ENCODE measurements at regions of chr10 and their contacts with region 1.

Region 1: GRCh38 chr10:89327784-89328441 is at the start of gene IFIT3:
- DNase-seq: no peak
- ATAC-seq: peak; percentile 22
- H3K4me3 Mint-ChIP-seq: peak within 1 kb of the TSS; percentile 86
- H3K27ac Mint-ChIP-seq: peak within 1 kb of the TSS; percentile 90
- H3K4me1 Mint-ChIP-seq: peaks cover 57% of the 10 kb centered on the region
- H3K27me3 Mint-ChIP-seq: no peaks in the 10 kb centered on the region
- CTCF ChIP-seq: no peak
- total RNA-seq, gene IFIT3: 3.2 TPM in 2 replicates

Region 2: DNA sequence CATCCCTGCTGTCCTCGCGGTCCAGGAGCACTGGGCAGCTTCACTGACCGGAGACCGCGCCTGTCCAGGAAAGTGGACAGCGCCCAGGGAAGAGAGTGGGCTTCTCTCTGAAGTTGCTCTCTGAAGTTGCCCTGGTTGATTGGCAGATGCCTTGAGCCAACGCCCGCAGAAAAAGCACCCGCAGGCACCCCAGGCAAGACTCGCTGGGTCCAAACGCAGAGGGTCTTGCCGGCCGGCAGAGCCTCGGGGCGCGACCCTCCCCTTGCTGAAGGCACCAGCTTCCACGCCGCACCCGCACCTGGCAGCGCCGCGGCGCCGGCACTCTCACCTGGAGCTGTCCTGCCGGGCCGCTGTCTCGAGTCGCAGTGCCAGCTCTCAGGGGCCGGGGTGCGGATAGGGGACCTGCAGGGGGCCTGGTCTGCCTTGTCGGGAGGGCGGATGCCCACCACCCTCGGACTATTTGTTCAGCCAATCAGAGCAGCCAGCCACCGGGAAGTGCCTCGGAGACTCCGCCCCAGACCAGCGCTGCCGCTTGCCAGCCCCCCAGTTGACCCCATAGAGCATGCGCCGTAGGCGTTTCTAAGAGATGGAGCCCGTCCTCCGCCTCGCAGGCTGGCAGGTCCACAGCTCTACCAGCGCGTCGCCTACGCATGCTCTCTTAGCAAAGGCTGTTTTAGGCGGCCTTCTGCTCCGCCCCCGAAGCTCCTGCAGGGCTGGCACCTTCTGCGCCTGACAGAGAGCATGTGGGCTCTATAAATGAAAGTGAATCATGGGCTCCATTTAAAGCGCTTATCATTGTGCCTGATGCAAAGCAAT is 76.3 kb before region 1 on chr10 and contains the start of gene LIPA:
- CTCF ChIA-PET with region 1: no interaction called
- POLR2A ChIA-PET with region 1: no interaction called
- intact Hi-C with region 1: loop called (anchors 1 kb)
- DNase-seq: peak; percentile 90
- ATAC-seq: peak; percentile 93
- H3K4me3 Mint-ChIP-seq: peak within 1 kb of the TSS; percentile 91
- H3K27ac Mint-ChIP-seq: peak within 1 kb of the TSS; percentile 79
- H3K4me1 Mint-ChIP-seq: peaks cover 26% of the 10 kb centered on the region
- H3K27me3 Mint-ChIP-seq: peaks cover 3% of the 10 kb centered on the region
- CTCF ChIP-seq: no peak
- total RNA-seq, gene LIPA: 32.8 and 35.3 TPM in 2 replicates

Region 3: DNA sequence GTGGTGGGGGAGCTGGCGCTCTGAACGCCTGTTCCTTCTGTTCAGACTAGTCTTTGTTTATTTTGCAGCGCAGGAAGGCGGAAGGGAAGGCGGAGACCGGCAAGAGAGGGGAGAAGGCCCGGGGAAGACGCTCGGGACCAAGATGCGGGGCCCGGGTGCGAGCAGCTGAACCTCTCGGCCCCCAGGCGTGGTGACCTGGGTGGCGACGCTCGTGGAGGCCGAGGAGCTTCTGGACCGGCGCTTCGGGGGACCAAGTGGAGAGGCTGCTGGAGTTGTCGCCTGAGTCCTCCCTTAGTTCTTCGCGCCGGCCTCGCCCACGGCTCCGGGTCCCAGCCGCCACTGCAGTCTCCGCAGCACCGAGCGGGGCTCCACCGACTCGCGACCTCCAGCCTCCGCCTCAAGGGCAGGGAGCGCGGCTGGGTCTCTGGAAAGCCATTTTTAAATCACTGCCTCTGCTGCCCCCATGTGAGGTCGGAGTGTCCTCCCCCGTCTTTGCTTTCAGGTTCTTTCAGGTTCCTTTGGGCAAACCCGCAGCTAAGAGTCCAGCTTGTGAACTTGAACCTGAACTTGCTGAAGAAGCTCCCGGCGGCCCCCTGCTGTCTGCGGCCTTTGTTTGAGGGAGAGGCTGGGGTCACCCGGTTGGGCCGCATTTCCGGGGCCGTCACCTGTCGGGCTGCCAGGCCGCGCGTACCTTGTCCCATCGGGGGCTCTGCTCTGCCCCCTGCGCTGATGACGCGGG is 509.4 kb after region 1 on chr10:
- CTCF ChIA-PET with region 1: no interaction called
- POLR2A ChIA-PET with region 1: no interaction called
- intact Hi-C with region 1: no loop called
- DNase-seq: peak; percentile 48
- ATAC-seq: peak; percentile 70
- H3K4me3 Mint-ChIP-seq: peak overlapping the region; percentile 83
- H3K27ac Mint-ChIP-seq: peak overlapping the region; percentile 75
- H3K4me1 Mint-ChIP-seq: peaks cover 15% of the 10 kb centered on the region
- H3K27me3 Mint-ChIP-seq: peaks cover 3% of the 10 kb centered on the region
- CTCF ChIP-seq: no peak

Measured in activated B cell treated with CpG ODN at 0.5 μM for 24 hours (primary cell).